ENCODE measurements at regions of chr6 and their contacts with region 1.

Region 1: GRCh38 chr6:5398530-5398929 is 137.2 kb downstream of the FARS2 start:
- DNase-seq: peak; percentile 63
- H3K4me3 ChIP-seq: no peak overlapping the region
- H3K27ac ChIP-seq: no peak overlapping the region
- H3K4me1 ChIP-seq: peaks cover 4% of the 10 kb centered on the region
- H3K27me3 ChIP-seq: no peaks in the 10 kb centered on the region

Region 2: DNA sequence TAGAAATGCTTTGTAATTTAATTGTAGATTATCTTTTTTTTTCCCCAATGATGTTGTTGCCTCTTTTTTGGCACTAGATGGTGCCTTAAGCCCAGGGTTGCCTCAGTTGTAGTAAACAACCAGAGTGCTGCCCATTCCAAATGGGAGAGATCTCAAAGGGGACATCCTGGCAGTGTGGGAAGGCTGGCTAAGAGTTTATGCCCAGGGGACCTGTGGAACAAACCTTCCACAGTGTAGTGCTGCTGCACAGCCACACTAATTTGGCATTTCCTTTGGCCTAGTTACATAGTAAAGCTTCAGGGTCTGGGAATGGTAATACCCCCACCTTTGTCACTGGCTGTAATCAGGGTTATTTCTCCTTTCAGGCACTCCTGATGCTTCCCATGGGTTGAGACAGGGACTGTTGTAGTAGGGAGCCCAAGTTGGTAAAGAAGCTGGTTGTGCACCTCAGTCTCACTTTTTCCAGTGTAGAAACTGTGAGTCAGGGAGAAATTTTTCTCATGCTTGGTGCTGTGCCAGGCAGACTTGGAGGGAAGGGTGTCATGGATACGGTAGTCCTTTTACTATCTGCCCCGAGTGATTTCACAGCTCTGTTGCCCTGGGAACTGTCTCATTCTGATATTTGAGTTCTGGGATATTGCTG is 1085.4 kb before region 1 on chr6:
- in situ Hi-C with region 1: loop called (anchors 25 kb)
- DNase-seq: peak; percentile 98
- H3K4me3 ChIP-seq: peak overlapping the region; percentile 53
- H3K27ac ChIP-seq: peak overlapping the region; percentile 98
- H3K4me1 ChIP-seq: peaks cover 35% of the 10 kb centered on the region
- H3K27me3 ChIP-seq: no peaks in the 10 kb centered on the region

Region 3: DNA sequence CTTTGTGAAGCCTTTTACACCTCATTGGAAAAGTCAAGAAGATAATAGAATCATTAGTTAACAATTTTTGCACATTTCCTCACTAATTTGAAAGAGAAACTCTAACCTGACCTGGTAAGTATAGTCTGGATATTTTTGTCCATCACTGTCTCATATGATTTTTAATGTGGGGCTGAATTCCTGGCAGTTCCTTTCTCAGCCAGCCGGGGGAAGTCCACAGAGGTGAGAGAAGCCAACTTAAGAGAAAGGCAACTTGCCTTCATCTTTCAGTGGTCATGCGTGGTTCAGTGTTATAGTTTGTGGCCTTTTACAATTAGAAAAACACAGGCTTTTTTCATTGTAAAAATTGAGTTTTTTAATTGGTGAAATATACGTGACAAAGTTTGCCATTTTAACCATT is 541.7 kb before region 1 on chr6:
- in situ Hi-C with region 1: no loop called
- DNase-seq: peak; percentile 9
- H3K4me3 ChIP-seq: no peak overlapping the region
- H3K27ac ChIP-seq: no peak overlapping the region
- H3K4me1 ChIP-seq: no peaks in the 10 kb centered on the region
- H3K27me3 ChIP-seq: no peaks in the 10 kb centered on the region

Region 4: DNA sequence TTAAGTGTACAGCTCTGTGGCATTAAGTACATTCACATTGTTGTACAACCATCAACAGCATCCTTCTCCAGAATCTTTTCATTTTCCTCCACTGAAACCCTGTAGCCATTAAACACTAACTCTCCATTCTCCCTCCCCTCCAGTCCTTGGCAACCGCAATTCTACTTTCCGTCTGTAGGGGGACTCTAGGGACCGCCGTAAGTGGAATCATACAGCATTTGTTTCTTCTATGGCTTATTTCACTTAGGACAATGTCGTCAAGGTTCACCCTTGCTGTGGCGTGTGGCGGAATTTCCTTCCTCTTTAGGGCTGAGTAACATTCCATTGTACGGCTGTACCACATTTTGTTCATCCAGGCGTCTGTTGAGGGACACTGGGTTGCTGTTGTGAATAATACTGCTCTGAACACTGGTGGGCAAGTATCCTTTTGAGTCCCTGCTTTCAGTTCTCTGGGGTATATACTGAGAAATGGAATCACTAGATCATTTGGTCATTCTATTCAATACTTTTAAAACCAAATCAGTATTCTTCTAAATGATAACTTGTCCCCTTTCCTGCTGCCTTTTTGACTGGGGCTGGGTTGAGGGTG is 262.6 kb before region 1 on chr6:
- in situ Hi-C with region 1: loop called (anchors 10 kb)
- DNase-seq: peak; percentile 43
- H3K4me3 ChIP-seq: no peak overlapping the region
- H3K27ac ChIP-seq: no peak overlapping the region
- H3K4me1 ChIP-seq: peaks cover 9% of the 10 kb centered on the region
- H3K27me3 ChIP-seq: no peaks in the 10 kb centered on the region

Region 5: DNA sequence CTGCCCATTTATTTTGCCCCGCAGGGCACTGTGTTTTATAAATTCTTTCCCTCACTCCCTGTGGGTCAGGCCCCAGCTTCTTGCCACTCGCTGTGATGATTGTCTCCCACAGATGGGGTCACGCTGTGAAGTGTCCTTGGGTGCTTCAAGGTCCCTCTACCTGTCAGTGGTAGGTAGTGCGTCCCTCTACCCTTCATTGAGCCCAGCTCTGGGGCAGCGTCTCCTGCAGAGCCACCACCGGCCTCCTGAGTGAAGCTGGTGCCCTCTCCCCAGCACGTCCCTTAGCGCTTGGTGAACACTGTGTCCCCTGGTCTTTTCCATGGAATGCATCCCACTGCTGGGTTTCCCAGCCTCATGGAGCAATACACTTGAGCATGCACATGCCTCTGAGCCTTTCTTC is 500.0 kb after region 1 on chr6:
- in situ Hi-C with region 1: no loop called
- DNase-seq: no peak
- H3K4me3 ChIP-seq: no peak overlapping the region
- H3K27ac ChIP-seq: no peak overlapping the region
- H3K4me1 ChIP-seq: no peaks in the 10 kb centered on the region
- H3K27me3 ChIP-seq: no peaks in the 10 kb centered on the region